ENCODE measurements at regions of chr12 and their contacts with region 1.

Region 1: GRCh38 chr12:18139989-18140596 is 50.1 kb upstream of the RERGL start:
- DNase-seq: no peak
- ATAC-seq: no peak
- H3K4me3 ChIP-seq: no peak overlapping the region
- H3K27ac ChIP-seq: no peak overlapping the region
- H3K4me1 ChIP-seq: peaks cover 0 to 18% (median 1%) of the 10 kb centered on the region in 12 donors
- H3K27me3 ChIP-seq: no peaks in the 10 kb centered on the region
- CTCF ChIP-seq: peak; percentile 42 to 73 (median 58)
- POLR2A ChIP-seq: no peak

Region 2: DNA sequence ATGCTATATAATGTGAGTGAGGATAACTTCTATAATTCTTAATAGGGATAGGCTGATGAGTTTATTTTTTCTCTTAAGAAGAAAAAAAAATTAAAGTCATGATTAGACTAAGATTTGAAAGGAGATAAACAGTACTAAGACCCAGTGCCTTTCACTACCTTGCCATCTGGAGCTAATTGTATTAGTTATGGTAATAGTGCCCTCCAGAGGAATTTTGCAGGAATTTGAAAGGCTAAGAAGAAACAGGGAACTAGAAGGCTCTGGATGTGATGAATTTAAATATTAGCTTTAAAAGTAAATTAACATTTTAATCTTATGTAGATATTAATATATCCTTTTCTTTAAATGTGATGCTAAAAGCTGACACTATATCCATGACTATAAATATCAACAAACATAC is 84.7 kb after region 1 on chr12:
- intact Hi-C with region 1: loop called in 7 of 10 experiments (anchors 2 to 10 kb)
- DNase-seq: no peak
- ATAC-seq: no peak
- H3K4me3 ChIP-seq: no peak overlapping the region
- H3K27ac ChIP-seq: no peak overlapping the region
- H3K4me1 ChIP-seq: no peaks in the 10 kb centered on the region
- H3K27me3 ChIP-seq: no peaks in the 10 kb centered on the region
- CTCF ChIP-seq: peak in 10 of 12 donors; percentile 17 to 57 (median 33)
- POLR2A ChIP-seq: no peak

Region 3: GRCh38 chr12:18320036-18320617 is 180.0 kb after region 1 on chr12:
- intact Hi-C with region 1: loop called in 1 of 10 experiments (anchors 10 kb)
- DNase-seq: peak in 1 of 5 donors; percentile 10
- ATAC-seq: peak in 3 of 4 donors; percentile 61 to 79 (median 65)
- H3K4me3 ChIP-seq: no peak overlapping the region
- H3K27ac ChIP-seq: no peak overlapping the region
- H3K4me1 ChIP-seq: no peaks in the 10 kb centered on the region
- H3K27me3 ChIP-seq: no peaks in the 10 kb centered on the region
- CTCF ChIP-seq: peak; percentile 7 to 59 (median 37)
- POLR2A ChIP-seq: no peak

Region 4: GRCh38 chr12:18737819-18738218 is 597.7 kb after region 1 on chr12 and contains the starts of genes CAPZA3 and PLCZ1:
- intact Hi-C with region 1: no loop called
- DNase-seq: no peak
- ATAC-seq: no peak
- H3K4me3 ChIP-seq: no peak within 1 kb of the TSS
- H3K27ac ChIP-seq: no peak within 1 kb of the TSS
- H3K4me1 ChIP-seq: no peaks in the 10 kb centered on the region
- H3K27me3 ChIP-seq: no peaks in the 10 kb centered on the region
- CTCF ChIP-seq: no peak
- POLR2A ChIP-seq: no peak
- total RNA-seq, gene CAPZA3: not detected
- total RNA-seq, gene PLCZ1: 0.61 TPM in 1 of 9 donors, not detected in the others